ENCODE measurements at regions of chr6 and their contacts with region 1.

Region 1: GRCh38 chr6:26156076-26156849 is 69.0 kb downstream of the HFE start:
- DNase-seq: peak; percentile 91
- ATAC-seq: peak; percentile 55
- H3K4me3 Mint-ChIP-seq: peak overlapping the region; percentile 94
- H3K27ac Mint-ChIP-seq: peak overlapping the region; percentile 99
- H3K4me1 Mint-ChIP-seq: peaks cover 37% of the 10 kb centered on the region
- H3K27me3 Mint-ChIP-seq: peaks cover 8% of the 10 kb centered on the region

Region 2: DNA sequence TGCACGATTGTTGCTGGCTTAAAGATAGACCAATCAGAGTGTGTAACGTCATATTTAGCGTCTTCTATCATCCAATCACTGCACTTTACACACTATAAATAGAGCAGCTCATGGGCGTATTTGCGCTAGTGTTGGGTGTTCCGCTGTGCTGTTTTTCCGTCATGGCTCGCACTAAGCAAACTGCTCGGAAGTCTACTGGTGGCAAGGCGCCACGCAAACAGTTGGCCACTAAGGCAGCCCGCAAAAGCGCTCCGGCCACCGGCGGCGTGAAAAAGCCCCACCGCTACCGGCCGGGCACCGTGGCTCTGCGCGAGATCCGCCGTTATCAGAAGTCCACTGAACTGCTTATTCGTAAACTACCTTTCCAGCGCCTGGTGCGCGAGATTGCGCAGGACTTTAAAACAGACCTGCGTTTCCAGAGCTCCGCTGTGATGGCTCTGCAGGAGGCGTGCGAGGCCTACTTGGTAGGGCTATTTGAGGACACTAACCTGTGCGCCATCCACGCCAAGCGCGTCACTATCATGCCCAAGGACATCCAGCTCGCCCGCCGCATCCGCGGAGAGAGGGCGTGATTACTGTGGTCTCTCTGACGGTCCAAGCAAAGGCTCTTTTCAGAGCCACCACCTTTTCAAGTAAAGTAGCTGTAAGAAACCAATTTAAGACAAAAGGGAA is 135.8 kb before region 1 on chr6:
- CTCF ChIA-PET with region 1: interaction called, 6 read pairs
- POLR2A ChIA-PET with region 1: interaction called, 312 read pairs
- DNase-seq: peak; percentile 88
- ATAC-seq: peak; percentile 51
- H3K4me3 Mint-ChIP-seq: peak overlapping the region; percentile 96
- H3K27ac Mint-ChIP-seq: peak overlapping the region; percentile 100
- H3K4me1 Mint-ChIP-seq: peaks cover 65% of the 10 kb centered on the region
- H3K27me3 Mint-ChIP-seq: no peaks in the 10 kb centered on the region

Region 3: GRCh38 chr6:26087284-26088115 is 68.8 kb before region 1 on chr6 and contains the start of gene HFE:
- CTCF ChIA-PET with region 1: no interaction called
- POLR2A ChIA-PET with region 1: interaction called, 19 read pairs
- DNase-seq: peak; percentile 50
- ATAC-seq: peak; percentile 48
- H3K4me3 Mint-ChIP-seq: peak within 1 kb of the TSS; percentile 80
- H3K27ac Mint-ChIP-seq: peak within 1 kb of the TSS; percentile 70
- H3K4me1 Mint-ChIP-seq: peaks cover 60% of the 10 kb centered on the region
- H3K27me3 Mint-ChIP-seq: peaks cover 1% of the 10 kb centered on the region
- total RNA-seq, gene HFE: 4.3 TPM

Region 4: DNA sequence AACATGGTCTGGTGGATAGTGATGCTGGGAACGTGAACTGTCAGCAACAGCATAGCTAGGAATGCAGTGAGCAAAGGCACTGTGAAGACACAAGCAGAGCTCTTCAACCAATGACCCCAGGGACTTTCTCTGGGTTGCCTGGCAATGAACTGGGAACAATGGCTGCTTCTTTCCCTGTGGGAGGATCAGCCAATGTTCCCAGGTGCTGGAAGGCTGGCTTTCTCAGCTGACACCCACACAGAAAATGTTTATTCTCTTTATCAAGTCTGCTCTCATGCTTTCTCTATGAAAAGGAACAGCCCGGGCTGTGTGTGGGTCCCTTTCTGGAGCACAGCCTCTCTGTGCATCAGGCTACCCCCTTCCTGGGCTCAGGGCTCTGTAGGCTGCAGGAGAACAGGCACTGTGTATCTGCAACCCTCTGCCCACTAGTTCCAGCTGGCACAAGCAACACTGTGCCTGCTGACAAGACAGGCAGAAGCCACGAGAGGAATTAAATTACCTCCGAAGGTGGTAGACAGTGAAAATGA is 14.8 kb before region 1 on chr6:
- CTCF ChIA-PET with region 1: no interaction called
- POLR2A ChIA-PET with region 1: interaction called, 150 read pairs
- DNase-seq: no peak
- ATAC-seq: no peak
- H3K4me3 Mint-ChIP-seq: no peak overlapping the region
- H3K27ac Mint-ChIP-seq: no peak overlapping the region
- H3K4me1 Mint-ChIP-seq: peaks cover 5% of the 10 kb centered on the region
- H3K27me3 Mint-ChIP-seq: no peaks in the 10 kb centered on the region

Region 5: DNA sequence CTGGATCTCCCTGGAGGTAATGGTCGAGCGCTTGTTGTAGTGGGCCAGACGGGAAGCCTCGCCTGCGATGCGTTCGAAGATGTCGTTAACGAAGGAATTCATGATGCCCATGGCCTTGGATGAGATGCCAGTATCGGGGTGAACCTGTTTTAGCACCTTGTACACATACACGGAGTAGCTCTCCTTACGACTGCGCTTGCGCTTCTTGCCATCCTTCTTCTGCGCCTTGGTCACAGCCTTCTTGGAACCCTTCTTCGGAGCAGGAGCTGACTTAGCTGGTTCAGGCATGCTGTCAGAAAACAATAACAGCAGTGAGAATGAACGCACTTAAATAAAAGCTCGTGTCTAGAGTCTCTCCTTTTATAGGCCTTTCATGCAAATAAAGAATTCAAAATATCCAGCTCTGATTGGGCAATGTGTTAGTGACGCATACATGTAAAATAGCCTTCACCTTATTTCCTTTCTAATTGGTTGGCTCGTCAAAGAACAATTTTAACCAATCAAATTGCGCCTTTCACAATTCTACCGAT is 60.2 kb after region 1 on chr6:
- CTCF ChIA-PET with region 1: interaction called, 4 read pairs
- POLR2A ChIA-PET with region 1: interaction called, 246 read pairs
- DNase-seq: peak; percentile 93
- ATAC-seq: peak; percentile 67
- H3K4me3 Mint-ChIP-seq: no peak overlapping the region
- H3K27ac Mint-ChIP-seq: no peak overlapping the region
- H3K4me1 Mint-ChIP-seq: peaks cover 43% of the 10 kb centered on the region
- H3K27me3 Mint-ChIP-seq: no peaks in the 10 kb centered on the region

Region 6: DNA sequence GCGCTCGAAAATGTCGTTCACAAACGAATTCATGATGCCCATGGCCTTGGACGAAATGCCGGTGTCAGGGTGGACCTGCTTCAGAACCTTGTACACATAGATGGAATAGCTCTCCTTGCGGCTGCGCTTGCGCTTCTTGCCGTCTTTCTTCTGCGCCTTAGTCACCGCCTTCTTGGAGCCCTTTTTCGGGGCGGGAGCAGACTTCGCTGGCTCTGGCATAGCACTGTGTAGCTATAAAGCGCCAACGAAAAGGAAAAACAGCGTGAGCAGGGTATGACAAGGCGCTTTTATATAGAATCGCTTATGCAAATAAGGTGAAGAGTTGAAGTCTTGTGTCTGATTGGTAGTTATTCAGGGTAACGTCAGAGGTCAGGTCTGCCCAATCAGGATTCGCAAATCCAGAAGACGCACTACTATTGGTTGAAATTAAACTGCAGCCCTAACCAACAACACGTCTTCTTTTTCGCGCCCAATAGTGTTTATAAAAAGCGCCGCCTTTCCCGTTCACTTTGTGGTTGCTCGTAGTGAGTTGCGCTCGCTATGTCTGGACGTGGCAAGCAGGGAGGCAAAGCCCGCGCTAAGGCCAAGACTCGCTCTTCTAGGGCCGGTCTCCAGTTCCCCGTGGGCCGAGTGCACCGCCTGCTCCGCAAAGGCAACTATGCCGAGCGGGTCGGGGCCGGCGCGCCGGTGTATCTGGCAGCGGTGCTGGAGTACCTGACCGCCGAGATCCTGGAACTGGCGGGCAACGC is 976.4 kb after region 1 on chr6:
- CTCF ChIA-PET with region 1: no interaction called
- POLR2A ChIA-PET with region 1: interaction called, 72 read pairs
- DNase-seq: peak; percentile 95
- ATAC-seq: peak; percentile 76
- H3K4me3 Mint-ChIP-seq: no peak overlapping the region
- H3K27ac Mint-ChIP-seq: no peak overlapping the region
- H3K4me1 Mint-ChIP-seq: peaks cover 68% of the 10 kb centered on the region
- H3K27me3 Mint-ChIP-seq: no peaks in the 10 kb centered on the region

Region 7: DNA sequence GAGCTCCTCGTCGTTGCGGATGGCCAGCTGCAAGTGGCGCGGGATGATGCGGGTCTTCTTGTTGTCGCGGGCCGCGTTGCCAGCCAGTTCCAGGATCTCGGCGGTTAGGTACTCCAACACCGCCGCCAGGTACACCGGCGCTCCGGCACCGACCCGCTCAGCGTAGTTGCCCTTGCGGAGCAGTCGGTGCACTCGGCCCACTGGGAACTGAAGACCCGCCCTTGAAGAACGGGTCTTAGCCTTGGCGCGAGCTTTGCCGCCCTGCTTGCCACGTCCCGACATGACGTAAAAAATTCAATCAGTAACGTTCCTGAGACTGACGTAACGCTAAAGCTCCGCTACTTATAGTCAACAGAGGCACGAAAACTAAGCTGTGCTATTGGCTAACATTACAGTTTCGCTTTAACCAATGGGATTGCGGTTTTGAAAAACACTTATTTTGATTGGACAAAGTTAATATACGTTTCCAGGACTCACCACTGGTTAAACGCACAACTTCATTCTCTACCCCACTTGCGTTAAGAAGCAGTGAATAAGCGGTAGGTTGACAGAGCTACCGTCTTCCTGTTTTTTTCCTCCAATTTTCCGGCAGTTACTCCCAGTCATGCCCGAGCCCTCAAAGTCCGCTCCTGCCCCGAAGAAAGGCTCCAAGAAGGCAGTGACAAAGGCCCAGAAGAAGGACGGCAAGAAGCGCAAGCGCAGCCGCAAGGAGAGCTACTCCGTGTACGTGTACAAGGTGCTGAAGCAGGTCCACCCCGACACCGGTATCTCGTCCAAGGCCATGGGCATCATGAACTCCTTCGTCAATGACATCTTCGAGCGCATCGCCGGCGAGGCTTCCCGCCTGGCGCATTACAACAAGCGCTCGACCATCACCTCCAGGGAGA is 1682.0 kb after region 1 on chr6:
- CTCF ChIA-PET with region 1: no interaction called
- POLR2A ChIA-PET with region 1: interaction called, 61 read pairs
- DNase-seq: peak; percentile 92
- ATAC-seq: peak; percentile 78
- H3K4me3 Mint-ChIP-seq: no peak overlapping the region
- H3K27ac Mint-ChIP-seq: no peak overlapping the region
- H3K4me1 Mint-ChIP-seq: peaks cover 33% of the 10 kb centered on the region
- H3K27me3 Mint-ChIP-seq: no peaks in the 10 kb centered on the region

Measured in activated CD8-positive, alpha-beta T cell treated with anti-CD3 and anti-CD28 coated beads, Interleukin-2, amount 10 ng/mL, durations not matched to agents 7 days and 5 days (primary cell).